ENCODE measurements at regions of chr4 and their contacts with region 1.

Region 1: DNA sequence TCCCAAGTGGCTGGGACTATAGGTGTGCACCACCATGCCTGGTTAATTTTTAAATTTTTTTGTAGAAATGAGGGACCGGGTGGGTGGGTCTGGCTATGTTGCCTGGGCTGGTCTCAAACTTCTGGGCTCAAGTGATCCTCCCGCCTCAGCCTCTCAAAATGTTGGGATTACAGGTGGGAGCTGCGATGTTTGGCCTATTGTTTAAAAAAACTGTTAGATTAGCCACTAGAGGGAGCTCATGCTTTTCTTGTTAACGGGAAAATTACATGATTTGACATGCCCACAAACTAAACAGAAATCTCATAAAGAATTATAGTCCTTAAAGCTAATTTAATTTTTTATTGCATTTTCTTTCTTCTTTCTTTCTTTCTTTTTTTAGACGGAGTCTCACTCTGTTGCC is 5.0 kb upstream of the SDAD1 start:
- DNase-seq: peak; percentile 17
- ATAC-seq: no peak
- H3K4me3 Mint-ChIP-seq: no peak overlapping the region
- H3K27ac Mint-ChIP-seq: no peak overlapping the region
- H3K4me1 Mint-ChIP-seq: peaks cover 3% of the 10 kb centered on the region
- H3K27me3 Mint-ChIP-seq: peaks cover 3% of the 10 kb centered on the region
- CTCF ChIP-seq: peak; percentile 84

Region 2: GRCh38 chr4:75953509-75953908 is 42.2 kb before region 1 on chr4:
- CTCF ChIA-PET with region 1: interaction called, 10 read pairs
- POLR2A ChIA-PET with region 1: no interaction called
- intact Hi-C with region 1: no loop called
- DNase-seq: no peak
- ATAC-seq: no peak
- H3K4me3 Mint-ChIP-seq: no peak overlapping the region
- H3K27ac Mint-ChIP-seq: peak overlapping the region; percentile 44
- H3K4me1 Mint-ChIP-seq: peaks cover 4% of the 10 kb centered on the region
- H3K27me3 Mint-ChIP-seq: no peaks in the 10 kb centered on the region
- CTCF ChIP-seq: no peak

Region 3: DNA sequence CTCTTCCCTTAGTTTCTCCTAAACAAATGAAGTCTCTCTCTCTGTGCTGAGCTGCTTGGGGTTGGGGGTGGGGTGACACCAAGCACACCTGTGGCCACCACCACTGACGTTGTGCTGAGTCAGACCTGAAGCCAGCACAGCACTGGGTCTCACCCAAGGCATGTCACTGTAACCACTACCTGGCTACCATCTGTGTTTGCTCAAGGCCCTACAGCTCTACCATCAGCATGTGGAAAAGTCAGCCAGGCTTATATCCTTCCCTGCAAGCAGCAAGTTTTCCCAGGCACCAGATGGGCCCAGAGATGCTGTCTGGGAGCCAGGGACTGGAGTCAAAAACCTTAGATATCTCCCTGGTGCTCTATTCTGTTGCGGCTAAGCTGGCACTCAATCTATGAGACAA is 20.7 kb after region 1 on chr4:
- CTCF ChIA-PET with region 1: interaction called, 11 read pairs
- POLR2A ChIA-PET with region 1: no interaction called
- intact Hi-C with region 1: no loop called
- DNase-seq: peak; percentile 28
- ATAC-seq: peak; percentile 68
- H3K4me3 Mint-ChIP-seq: no peak overlapping the region
- H3K27ac Mint-ChIP-seq: no peak overlapping the region
- H3K4me1 Mint-ChIP-seq: no peaks in the 10 kb centered on the region
- H3K27me3 Mint-ChIP-seq: peaks cover 7% of the 10 kb centered on the region
- CTCF ChIP-seq: no peak

Region 4: DNA sequence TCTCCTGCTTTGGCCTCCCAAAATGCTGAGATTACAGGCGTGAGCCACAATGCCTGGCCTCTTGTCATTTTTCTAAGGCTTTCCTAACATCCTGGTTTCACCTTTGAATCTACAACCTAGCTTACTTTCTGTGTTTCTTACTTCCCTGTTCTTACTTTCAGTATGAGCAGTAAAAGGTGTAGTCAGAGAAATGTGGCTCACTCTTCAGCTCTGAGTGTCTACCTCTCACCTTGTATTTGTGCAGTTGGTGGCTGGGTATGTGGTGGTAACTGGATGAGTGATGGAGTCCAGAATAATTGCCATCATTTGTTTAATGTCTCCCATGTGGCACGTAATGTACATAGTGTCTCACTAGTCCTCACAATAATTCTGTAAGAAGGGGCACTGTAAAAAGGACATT is 59.3 kb after region 1 on chr4:
- CTCF ChIA-PET with region 1: interaction called, 30 read pairs
- POLR2A ChIA-PET with region 1: interaction called, 3 read pairs
- intact Hi-C with region 1: no loop called
- DNase-seq: peak; percentile 44
- ATAC-seq: peak; percentile 80
- H3K4me3 Mint-ChIP-seq: no peak overlapping the region
- H3K27ac Mint-ChIP-seq: no peak overlapping the region
- H3K4me1 Mint-ChIP-seq: peaks cover 35% of the 10 kb centered on the region
- H3K27me3 Mint-ChIP-seq: peaks cover 24% of the 10 kb centered on the region
- CTCF ChIP-seq: no peak

Region 5: DNA sequence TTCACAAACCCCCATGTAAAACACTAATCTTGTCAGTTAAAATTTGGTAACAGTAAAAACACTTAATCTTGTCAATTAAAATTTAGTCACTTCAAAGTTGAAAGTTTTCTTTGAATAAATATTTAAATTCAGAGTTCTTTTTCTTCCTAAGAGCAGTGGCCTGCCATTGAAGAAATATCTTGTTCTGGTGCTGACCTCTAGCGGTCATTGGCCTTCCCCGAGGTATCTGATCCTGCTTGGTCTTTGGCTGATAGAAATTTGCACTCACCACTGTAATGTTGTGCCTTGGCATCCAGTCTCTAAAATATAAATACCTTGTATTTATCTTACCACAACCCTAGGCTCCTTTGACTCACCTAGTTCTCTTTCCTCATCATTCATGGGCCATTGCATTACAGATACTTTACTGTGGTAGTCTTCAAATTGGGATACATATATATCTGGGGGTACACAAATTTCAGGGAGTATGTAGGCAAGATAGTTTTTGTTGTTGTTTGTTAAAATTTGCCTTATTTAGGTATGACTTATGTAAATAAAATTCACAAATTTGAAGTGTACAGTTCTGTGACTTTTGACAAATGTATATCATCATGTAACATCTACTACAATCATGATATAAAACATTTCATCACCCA is 72.0 kb after region 1 on chr4:
- CTCF ChIA-PET with region 1: interaction called, 62 read pairs
- POLR2A ChIA-PET with region 1: interaction called, 3 read pairs
- intact Hi-C with region 1: loop called (anchors 1 kb)
- DNase-seq: peak; percentile 87
- ATAC-seq: peak; percentile 87
- H3K4me3 Mint-ChIP-seq: no peak overlapping the region
- H3K27ac Mint-ChIP-seq: no peak overlapping the region
- H3K4me1 Mint-ChIP-seq: no peaks in the 10 kb centered on the region
- H3K27me3 Mint-ChIP-seq: peaks cover 1% of the 10 kb centered on the region
- CTCF ChIP-seq: peak; percentile 74

Region 6: GRCh38 chr4:76087007-76087769 is 91.5 kb after region 1 on chr4:
- CTCF ChIA-PET with region 1: interaction called, 18 read pairs
- POLR2A ChIA-PET with region 1: no interaction called
- intact Hi-C with region 1: no loop called
- DNase-seq: peak; percentile 17
- ATAC-seq: peak; percentile 53
- H3K4me3 Mint-ChIP-seq: no peak overlapping the region
- H3K27ac Mint-ChIP-seq: no peak overlapping the region
- H3K4me1 Mint-ChIP-seq: peaks cover 3% of the 10 kb centered on the region
- H3K27me3 Mint-ChIP-seq: no peaks in the 10 kb centered on the region
- CTCF ChIP-seq: no peak

Measured in activated CD8-positive, alpha-beta T cell treated with anti-CD3 and anti-CD28 coated beads for 36 hours (primary cell).